CD4-positive, alpha-beta T cell (primary cell): ENCODE measurements at regions of chr12 and their contacts with region 1.

Region 1: DNA sequence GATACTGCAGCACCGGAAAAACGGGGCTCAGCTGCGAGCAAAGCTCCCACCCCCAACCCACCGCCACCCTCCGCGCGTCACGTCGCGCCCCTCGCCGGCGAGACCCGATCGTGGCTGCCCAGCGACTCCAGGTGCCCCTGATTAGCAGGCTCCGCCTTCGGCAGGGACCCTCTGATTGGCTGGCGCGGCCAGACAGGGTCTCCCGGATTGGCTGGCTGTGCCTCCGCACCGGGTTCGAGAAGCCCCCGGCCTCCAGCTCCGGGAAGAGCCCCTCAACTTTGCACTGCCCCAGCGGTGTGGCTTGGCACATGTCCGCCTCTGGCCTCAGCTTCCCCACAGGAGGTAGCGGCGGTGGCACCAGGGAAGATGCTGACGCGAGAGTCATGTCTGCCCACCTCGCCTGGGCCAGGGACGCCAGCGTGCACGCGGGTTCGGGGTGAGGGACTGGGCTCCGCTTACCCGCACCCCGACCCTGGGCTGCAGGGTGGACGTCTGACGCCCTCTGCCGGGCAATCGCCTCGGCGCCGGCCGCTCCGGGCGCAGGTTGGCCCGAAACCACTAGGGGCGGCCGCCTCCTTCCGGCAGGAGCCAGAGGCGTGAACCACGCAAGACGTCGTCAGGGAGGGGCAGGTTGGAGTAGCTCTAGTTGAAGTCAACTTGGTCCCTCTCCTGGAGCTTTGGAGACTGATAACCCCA is 498 bp upstream of the RHOF start:
- DNase-seq: peak; percentile 90 to 98 (median 95)
- ATAC-seq: peak; percentile 48
- H3K4me3 ChIP-seq: peak overlapping the region; percentile 94
- H3K4me3 Mint-ChIP-seq: peak overlapping the region; percentile 85
- H3K27ac ChIP-seq: peak overlapping the region; percentile 94 to 99
- H3K27ac Mint-ChIP-seq: peak overlapping the region; percentile 97
- H3K4me1 ChIP-seq: peaks cover 94% of the 10 kb centered on the region
- H3K4me1 Mint-ChIP-seq: peaks cover 72% of the 10 kb centered on the region
- H3K27me3 ChIP-seq: no peaks in the 10 kb centered on the region
- H3K27me3 Mint-ChIP-seq: no peaks in the 10 kb centered on the region
- CTCF ChIP-seq: peak; percentile 97

Region 2: GRCh38 chr12:120292661-120293531 is 1501.1 kb before region 1 on chr12 and contains the start of gene RNU4-1:
- CTCF ChIA-PET with region 1: no interaction called
- POLR2A ChIA-PET with region 1: no interaction called
- intact Hi-C with region 1: no loop called
- DNase-seq: peak; percentile 49 to 92 (median 64)
- ATAC-seq: peak; percentile 51
- H3K4me3 ChIP-seq: peak within 1 kb of the TSS; percentile 75
- H3K4me3 Mint-ChIP-seq: no peak within 1 kb of the TSS
- H3K27ac ChIP-seq: peak within 1 kb of the TSS; percentile 99 to 100
- H3K27ac Mint-ChIP-seq: no peak within 1 kb of the TSS
- H3K4me1 ChIP-seq: peaks cover 23% of the 10 kb centered on the region
- H3K4me1 Mint-ChIP-seq: peaks cover 5% of the 10 kb centered on the region
- H3K27me3 ChIP-seq: no peaks in the 10 kb centered on the region
- H3K27me3 Mint-ChIP-seq: no peaks in the 10 kb centered on the region
- CTCF ChIP-seq: no peak
- total RNA-seq, gene RNU4-1: 913 to 1,035 TPM

Region 3: GRCh38 chr12:120820885-120821510 is 973.0 kb before region 1 on chr12:
- CTCF ChIA-PET with region 1: no interaction called
- POLR2A ChIA-PET with region 1: no interaction called
- intact Hi-C with region 1: no loop called
- DNase-seq: peak in 10 of 14 experiments; percentile 4 to 43 (median 18)
- ATAC-seq: peak; percentile 64
- H3K4me3 ChIP-seq: no peak overlapping the region
- H3K4me3 Mint-ChIP-seq: peak overlapping the region; percentile 35
- H3K27ac ChIP-seq: no peak overlapping the region
- H3K27ac Mint-ChIP-seq: peak overlapping the region; percentile 1
- H3K4me1 ChIP-seq: no peaks in the 10 kb centered on the region
- H3K4me1 Mint-ChIP-seq: peaks cover 61% of the 10 kb centered on the region
- H3K27me3 ChIP-seq: no peaks in the 10 kb centered on the region
- H3K27me3 Mint-ChIP-seq: no peaks in the 10 kb centered on the region
- CTCF ChIP-seq: no peak

Region 4: GRCh38 chr12:121536899-121537813 is 256.8 kb before region 1 on chr12:
- CTCF ChIA-PET with region 1: interaction called, 3 read pairs
- POLR2A ChIA-PET with region 1: interaction called, 8 read pairs
- intact Hi-C with region 1: loop called in 1 of 2 experiments (anchors 10 kb)
- DNase-seq: peak in 13 of 14 experiments; percentile 16 to 84 (median 37)
- ATAC-seq: peak; percentile 10
- H3K4me3 ChIP-seq: peak overlapping the region; percentile 58
- H3K4me3 Mint-ChIP-seq: peak overlapping the region; percentile 94
- H3K27ac ChIP-seq: peak overlapping the region; percentile 67 to 80
- H3K27ac Mint-ChIP-seq: peak overlapping the region; percentile 93
- H3K4me1 ChIP-seq: peaks cover 60% of the 10 kb centered on the region
- H3K4me1 Mint-ChIP-seq: peaks cover 44% of the 10 kb centered on the region
- H3K27me3 ChIP-seq: no peaks in the 10 kb centered on the region
- H3K27me3 Mint-ChIP-seq: no peaks in the 10 kb centered on the region
- CTCF ChIP-seq: no peak

Region 5: GRCh38 chr12:121688966-121689365 is 105.0 kb before region 1 on chr12:
- CTCF ChIA-PET with region 1: interaction called, 20 read pairs
- POLR2A ChIA-PET with region 1: interaction called, 21 read pairs
- intact Hi-C with region 1: no loop called
- DNase-seq: no peak
- ATAC-seq: no peak
- H3K4me3 ChIP-seq: no peak overlapping the region
- H3K4me3 Mint-ChIP-seq: no peak overlapping the region
- H3K27ac ChIP-seq: no peak overlapping the region
- H3K27ac Mint-ChIP-seq: no peak overlapping the region
- H3K4me1 ChIP-seq: peaks cover 14% of the 10 kb centered on the region
- H3K4me1 Mint-ChIP-seq: peaks cover 12% of the 10 kb centered on the region
- H3K27me3 ChIP-seq: no peaks in the 10 kb centered on the region
- H3K27me3 Mint-ChIP-seq: no peaks in the 10 kb centered on the region
- CTCF ChIP-seq: no peak

Region 6: GRCh38 chr12:121712461-121713256 is 81.3 kb before region 1 on chr12 and contains the start of gene TMEM120B:
- CTCF ChIA-PET with region 1: interaction called, 21 read pairs
- POLR2A ChIA-PET with region 1: interaction called, 73 read pairs
- intact Hi-C with region 1: loop called (anchors 5 kb)
- DNase-seq: peak; percentile 71 to 93 (median 82)
- ATAC-seq: peak; percentile 87
- H3K4me3 ChIP-seq: peak within 1 kb of the TSS; percentile 99
- H3K4me3 Mint-ChIP-seq: peak within 1 kb of the TSS; percentile 90
- H3K27ac ChIP-seq: peak within 1 kb of the TSS; percentile 40 to 54
- H3K27ac Mint-ChIP-seq: peak within 1 kb of the TSS; percentile 83
- H3K4me1 ChIP-seq: peaks cover 27% of the 10 kb centered on the region
- H3K4me1 Mint-ChIP-seq: peaks cover 19% of the 10 kb centered on the region
- H3K27me3 ChIP-seq: no peaks in the 10 kb centered on the region
- H3K27me3 Mint-ChIP-seq: no peaks in the 10 kb centered on the region
- CTCF ChIP-seq: peak; percentile 26
- total RNA-seq, gene TMEM120B: 7.3 to 7.7 TPM

Region 7: DNA sequence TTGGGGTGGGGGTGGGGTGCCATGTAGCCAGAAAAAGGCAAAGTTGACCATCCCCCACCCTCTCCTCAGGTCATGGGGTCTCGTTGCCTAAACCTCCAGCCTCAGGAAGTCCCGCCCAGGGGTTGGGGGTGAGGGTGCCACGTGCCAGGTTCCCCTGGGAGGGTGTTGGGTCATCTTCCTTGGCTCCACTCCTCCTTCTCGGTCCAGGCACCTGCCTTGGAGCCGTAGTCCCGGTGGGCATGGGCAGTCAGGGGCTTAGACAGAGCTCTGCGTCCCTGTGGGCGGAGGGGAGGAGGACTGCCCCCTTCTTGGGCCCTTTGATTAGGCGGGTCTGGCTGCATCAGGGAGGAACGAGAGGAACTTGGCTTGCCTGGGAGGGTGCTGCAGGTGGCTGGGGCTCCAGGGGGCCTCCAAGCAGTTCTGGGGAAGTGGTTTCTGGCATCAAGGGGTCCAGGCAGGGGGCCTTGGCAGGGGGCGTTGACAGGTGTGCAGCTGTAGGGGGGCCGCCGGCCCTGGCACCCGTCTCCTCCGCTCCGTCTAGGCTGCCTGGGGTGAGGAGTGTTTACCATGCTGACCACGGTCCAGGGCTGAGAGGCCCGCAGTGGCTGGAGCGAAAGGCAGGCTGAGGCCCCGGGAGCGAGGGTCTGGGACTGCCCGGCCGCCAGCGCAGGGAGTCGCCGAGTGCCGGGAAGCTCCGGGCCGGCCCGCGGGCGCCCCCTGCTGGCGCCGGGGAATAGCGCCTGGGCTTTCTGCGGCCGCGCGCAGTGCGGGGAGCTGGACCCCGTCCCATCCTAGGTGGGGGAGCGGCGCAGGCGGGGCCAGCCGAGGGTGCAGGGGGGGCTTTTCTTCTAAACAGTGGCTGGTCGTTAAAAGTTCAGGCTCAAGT is 17.7 kb after region 1 on chr12:
- CTCF ChIA-PET with region 1: interaction called, 746 read pairs
- POLR2A ChIA-PET with region 1: interaction called, 1,869 read pairs
- intact Hi-C with region 1: loop called (anchors 1 kb)
- DNase-seq: peak in 13 of 14 experiments; percentile 33 to 85 (median 66)
- ATAC-seq: peak; percentile 69
- H3K4me3 ChIP-seq: peak overlapping the region; percentile 64
- H3K4me3 Mint-ChIP-seq: peak overlapping the region; percentile 79
- H3K27ac ChIP-seq: peak overlapping the region; percentile 1 to 44
- H3K27ac Mint-ChIP-seq: peak overlapping the region; percentile 75
- H3K4me1 ChIP-seq: peaks cover 74% of the 10 kb centered on the region
- H3K4me1 Mint-ChIP-seq: peaks cover 58% of the 10 kb centered on the region
- H3K27me3 ChIP-seq: no peaks in the 10 kb centered on the region
- H3K27me3 Mint-ChIP-seq: no peaks in the 10 kb centered on the region
- CTCF ChIP-seq: peak; percentile 97

Region 8: DNA sequence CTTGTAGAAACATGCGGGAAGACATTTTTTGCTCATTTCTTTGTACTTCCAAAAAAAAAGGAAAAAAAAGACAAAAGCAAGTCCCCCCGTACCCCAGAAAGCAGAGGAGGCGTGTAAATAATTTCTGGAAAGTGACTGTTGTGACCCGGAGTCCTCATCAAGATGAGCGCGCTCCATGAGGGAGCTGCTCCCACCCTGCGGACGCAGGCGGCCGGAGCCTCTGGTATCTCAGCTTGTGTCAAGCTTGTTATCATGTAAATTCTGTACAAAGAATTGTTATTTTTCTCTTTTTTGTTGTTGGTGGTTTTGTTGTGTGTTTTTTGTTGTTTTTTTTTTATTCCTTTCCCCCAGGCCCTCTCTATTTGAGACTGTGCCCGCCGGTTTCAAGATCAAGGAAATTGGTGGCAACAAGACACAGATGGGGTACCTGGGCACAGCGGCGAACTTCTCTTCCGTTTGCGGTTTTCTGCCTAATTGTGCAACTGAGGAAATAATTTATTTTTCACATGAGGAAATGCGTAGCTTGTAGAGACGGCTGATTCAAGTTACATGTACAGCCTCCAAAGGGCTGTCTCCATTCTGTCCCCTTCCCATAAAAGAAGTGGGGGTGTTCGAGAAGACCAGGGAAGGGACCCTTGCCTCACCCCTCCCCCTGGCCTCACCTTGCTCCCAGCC is 37.7 kb after region 1 on chr12:
- CTCF ChIA-PET with region 1: interaction called, 44 read pairs
- POLR2A ChIA-PET with region 1: interaction called, 22 read pairs
- intact Hi-C with region 1: no loop called
- DNase-seq: no peak
- ATAC-seq: no peak
- H3K4me3 ChIP-seq: no peak overlapping the region
- H3K4me3 Mint-ChIP-seq: no peak overlapping the region
- H3K27ac ChIP-seq: no peak overlapping the region
- H3K27ac Mint-ChIP-seq: no peak overlapping the region
- H3K4me1 ChIP-seq: no peaks in the 10 kb centered on the region
- H3K4me1 Mint-ChIP-seq: no peaks in the 10 kb centered on the region
- H3K27me3 ChIP-seq: no peaks in the 10 kb centered on the region
- H3K27me3 Mint-ChIP-seq: no peaks in the 10 kb centered on the region
- CTCF ChIP-seq: no peak

Region 9: GRCh38 chr12:121888478-121889266 is 94.7 kb after region 1 on chr12 and contains the start of gene PSMD9:
- CTCF ChIA-PET with region 1: interaction called, 46 read pairs
- POLR2A ChIA-PET with region 1: interaction called, 62 read pairs
- intact Hi-C with region 1: loop called (anchors 1 to 2 kb)
- DNase-seq: peak; percentile 96 to 99 (median 98)
- ATAC-seq: peak; percentile 90
- H3K4me3 ChIP-seq: peak within 1 kb of the TSS; percentile 96
- H3K4me3 Mint-ChIP-seq: peak within 1 kb of the TSS; percentile 96
- H3K27ac ChIP-seq: peak within 1 kb of the TSS; percentile 86 to 97
- H3K27ac Mint-ChIP-seq: peak within 1 kb of the TSS; percentile 96
- H3K4me1 ChIP-seq: peaks cover 39% of the 10 kb centered on the region
- H3K4me1 Mint-ChIP-seq: peaks cover 32% of the 10 kb centered on the region
- H3K27me3 ChIP-seq: no peaks in the 10 kb centered on the region
- H3K27me3 Mint-ChIP-seq: no peaks in the 10 kb centered on the region
- CTCF ChIP-seq: peak; percentile 21
- total RNA-seq, gene PSMD9: 29.5 to 31.8 TPM